Posterior vena cava (tissue), 2 donors: ENCODE measurements at regions of chr12 and their contacts with region 1.

Region 1: DNA sequence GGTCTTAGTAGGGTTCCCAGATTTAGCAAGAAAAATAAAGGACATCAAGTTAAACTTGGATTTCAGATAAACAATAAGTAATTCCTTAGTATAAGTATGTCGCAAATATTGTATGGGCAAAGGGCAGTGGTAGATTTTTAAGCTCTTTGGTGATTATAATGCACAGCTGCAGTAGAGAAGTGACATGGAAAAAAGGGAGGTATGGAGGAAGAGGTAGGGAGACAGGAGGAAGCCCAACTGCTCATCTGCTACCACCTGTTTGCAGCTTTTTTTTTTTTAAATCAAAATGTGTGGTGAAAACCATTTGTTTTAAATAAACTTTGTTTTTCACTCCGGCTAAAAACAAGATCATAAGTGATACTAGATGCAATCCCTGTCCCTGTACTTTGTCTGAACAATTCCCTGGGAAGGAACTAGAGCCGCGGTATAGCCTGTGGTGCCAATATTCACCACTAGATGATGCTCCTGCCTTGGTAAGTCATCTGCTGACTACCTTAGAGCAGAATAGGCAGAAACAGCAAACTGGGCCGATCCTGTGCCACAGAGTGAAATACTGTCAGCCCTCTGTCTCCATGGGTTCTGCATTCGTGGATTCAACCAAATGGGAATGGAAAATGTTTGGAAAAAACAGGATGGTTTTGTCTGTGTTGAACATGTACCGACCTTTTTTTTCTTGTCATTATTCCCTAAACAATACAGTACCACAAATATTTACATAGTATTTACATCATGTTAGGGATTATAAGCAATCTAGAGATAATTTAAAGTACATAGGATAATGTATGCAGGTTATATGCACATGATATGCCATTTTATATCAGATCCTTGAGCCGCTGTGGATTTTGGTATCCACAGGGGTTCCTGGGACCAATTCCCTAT is 62.4 kb upstream of the PLBD1 start:
- DNase-seq: peak; percentile 77

Region 2: DNA sequence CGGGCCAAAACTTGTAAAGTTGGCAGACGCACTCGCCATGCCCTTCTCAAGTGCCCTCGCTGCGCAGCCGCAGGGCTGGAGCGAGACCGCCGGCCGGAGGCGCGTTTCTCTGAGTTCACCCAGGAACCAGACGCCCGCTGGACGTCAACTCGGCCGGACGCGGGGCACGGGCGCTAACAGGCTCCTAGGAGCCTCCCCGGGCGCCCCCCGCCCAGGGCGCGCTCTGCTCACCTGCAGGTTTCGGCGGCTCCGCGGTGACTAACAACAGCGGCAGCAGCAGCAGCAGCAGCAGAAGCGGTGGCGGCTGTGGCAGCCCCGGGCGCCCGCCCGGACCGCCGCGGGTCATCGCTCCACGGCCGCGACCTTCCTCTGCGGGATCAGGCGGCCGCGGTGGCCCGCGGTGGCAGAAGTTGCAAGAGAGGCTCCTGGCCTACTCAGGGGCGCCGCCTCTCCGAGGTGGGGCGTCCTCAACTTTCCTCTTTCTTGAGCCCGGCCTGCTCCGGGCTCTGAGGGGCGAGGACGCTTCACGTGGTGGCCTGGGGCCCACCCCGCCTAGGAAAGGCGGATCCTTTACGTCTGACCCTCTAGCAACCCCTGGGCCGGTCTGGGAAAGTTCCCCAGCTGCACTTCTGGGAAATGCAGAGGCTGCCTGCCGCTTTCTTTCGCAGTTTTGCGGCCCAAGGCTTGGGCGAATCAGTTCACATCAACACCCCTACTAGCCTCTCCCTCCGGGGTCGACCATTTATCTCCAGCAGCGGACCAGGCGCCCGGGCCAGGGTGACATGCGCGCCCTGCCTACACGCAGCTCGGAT is 62.5 kb before region 1 on chr12 and contains the start of gene PLBD1:
- intact Hi-C with region 1: no loop called
- DNase-seq: peak; percentile 90
- total RNA-seq, gene PLBD1: 12.4 to 25.5 TPM

Region 3: DNA sequence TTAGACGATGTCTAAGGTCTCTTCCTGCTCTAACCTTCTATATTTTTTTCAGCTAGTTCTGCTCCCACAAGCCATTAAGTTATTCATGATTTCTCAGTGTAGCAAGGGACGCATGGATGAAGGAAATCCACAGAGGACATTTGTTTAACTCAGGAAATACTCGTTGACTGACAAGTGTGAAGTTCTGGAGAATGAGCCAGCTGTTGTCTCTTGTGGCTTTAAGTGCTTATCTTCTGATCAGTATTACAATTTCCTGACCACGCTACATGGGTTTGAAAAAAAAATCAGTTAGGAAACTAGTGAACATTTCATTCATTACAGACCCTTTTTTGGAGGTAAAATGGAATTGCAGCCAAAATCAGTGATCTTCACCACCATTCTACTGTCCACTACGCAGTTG is 13.2 kb after region 1 on chr12:
- intact Hi-C with region 1: loop called in 1 of 2 experiments (anchors 1 kb)
- DNase-seq: no peak

Region 4: GRCh38 chr12:14664510-14664909 is 34.4 kb after region 1 on chr12:
- intact Hi-C with region 1: loop called in 1 of 2 experiments (anchors 1 kb)
- DNase-seq: no peak